Right ventricle myocardium inferior (tissue), 1 donor: ENCODE measurements at regions of chr1 and their contacts with region 1.

Region 1: GRCh38 chr1:162285149-162285561 is 91.5 kb downstream of the SPATA46 start:
- DNase-seq: no peak
- ATAC-seq: peak; percentile 89

Region 2: GRCh38 chr1:162070825-162071224 is 214.3 kb before region 1 on chr1:
- intact Hi-C with region 1: no loop called
- DNase-seq: no peak
- ATAC-seq: no peak

Region 3: DNA sequence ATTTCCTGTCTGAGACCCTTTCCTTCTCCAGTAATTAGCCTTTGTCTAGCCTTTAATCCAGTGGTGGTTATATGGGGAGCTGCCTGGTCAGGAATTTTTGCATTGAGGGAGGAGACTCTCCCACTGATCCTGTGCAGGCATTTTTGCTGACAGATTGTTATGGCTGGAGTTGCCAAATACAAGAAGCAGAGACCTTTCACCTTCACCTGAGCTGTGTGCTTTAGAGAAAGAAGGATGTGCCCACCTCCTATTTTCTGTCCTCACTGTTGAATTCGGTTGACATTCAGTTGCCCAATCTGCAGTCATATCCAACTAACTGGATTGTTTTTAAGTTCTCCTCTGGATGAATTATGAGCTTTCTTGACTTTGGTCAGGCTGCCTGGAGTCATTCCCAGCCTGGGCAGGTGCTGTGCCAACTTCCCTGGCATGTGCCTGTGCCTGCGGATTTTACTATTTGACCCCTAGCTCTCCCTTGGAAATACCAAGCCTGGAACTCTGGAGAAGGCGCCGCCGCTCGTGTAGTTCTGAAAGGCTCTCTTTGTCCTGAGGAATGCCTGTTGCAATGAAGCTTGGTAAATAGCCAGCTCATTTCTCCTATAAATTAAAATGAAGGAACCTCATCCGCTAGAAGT is 71.8 kb before region 1 on chr1:
- intact Hi-C with region 1: loop called (anchors 5 kb)
- DNase-seq: no peak
- ATAC-seq: peak; percentile 84

Region 4: GRCh38 chr1:162381383-162381782 is 96.2 kb after region 1 on chr1 and contains the start of gene C1orf226:
- intact Hi-C with region 1: no loop called
- DNase-seq: no peak
- ATAC-seq: no peak
- total RNA-seq, gene C1orf226: 4.6 TPM